ENCODE measurements at regions of chr16 and their contacts with region 1.

Region 1: DNA sequence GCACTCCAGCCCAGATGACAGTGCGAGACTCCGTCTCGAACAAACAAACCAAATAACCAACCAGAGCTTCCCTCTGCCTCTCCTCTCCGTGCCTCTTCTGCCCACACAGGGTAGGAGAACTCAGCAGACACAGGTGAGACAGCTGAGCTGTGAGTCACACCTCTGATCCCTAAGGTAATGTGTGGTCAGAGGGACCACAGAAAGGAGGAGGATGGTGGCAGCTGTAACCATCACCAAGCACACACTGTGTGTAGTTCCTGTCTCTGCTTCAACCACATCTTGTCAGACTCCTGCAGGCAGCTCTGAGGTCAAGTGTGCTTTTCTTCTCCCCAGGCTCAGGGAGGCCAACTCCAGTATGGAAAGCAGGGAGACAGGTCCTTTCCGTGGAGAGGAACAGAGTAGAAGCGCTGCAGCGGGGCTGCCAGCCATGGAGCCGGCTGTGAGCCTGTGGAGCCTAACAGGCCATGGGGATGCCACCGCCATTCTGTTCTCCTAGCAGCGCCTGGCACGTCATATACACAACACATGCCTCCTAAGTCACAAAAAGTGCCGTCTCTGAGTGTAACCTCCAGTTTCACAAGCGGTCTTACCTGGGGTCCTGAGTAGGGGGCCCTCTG is 7.1 kb downstream of the NUDT16L1 start:
- DNase-seq: peak in 1 of 10 donors; percentile 22
- H3K4me3 ChIP-seq: no peak overlapping the region
- H3K27ac ChIP-seq: no peak overlapping the region
- H3K27me3 ChIP-seq: no peaks in the 10 kb centered on the region
- CTCF ChIP-seq: no peak

Region 2: DNA sequence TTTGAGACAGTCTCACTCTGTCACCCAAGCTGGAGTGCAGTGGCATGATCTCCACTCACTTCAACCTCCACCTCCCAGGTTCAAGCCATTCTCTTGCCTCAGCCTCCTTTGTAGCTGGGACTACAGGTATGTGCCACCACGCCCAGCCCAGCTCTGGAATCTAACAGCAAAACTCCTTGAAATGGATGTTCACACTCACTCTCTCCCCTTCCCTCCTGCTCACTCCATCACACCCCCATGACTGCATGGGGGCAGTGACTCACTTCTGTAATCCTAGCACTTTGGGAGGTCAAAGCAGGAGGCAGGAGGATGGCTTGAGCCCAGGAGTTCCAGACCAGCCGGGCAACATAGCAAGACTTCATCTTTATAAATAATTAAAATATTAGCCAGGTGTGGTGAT is 416.5 kb before region 1 on chr16:
- intact Hi-C with region 1: no loop called
- DNase-seq: no peak
- H3K4me3 ChIP-seq: no peak overlapping the region
- H3K27ac ChIP-seq: no peak overlapping the region
- H3K27me3 ChIP-seq: no peaks in the 10 kb centered on the region
- CTCF ChIP-seq: no peak

Region 3: GRCh38 chr16:4664538-4665418 is 35.7 kb before region 1 on chr16:
- intact Hi-C with region 1: no loop called
- DNase-seq: no peak
- H3K4me3 ChIP-seq: no peak overlapping the region
- H3K27ac ChIP-seq: peak overlapping the region in 35 of 59 donors; percentile 12 to 94 (median 72)
- H3K27me3 ChIP-seq: no peaks in the 10 kb centered on the region
- CTCF ChIP-seq: no peak

Region 4: DNA sequence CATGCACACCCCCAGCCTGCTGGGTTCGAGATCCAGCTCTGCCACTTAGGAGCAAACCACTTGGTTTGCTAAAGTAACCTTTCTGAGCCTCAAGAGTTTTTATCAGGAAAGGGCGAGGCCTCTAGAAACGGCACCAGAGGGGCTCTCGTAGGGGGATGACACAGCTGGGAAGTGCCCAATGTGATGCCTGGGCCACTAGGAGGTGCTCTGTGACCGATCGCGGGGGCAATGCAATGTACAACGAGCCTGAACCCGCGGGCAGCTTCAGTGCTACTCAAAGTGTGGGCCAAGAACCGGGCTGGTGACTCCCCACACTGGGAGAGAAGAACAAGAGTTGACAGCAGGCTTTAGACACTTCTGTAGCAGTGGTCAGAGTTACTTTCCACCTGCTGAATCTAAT is 355.9 kb after region 1 on chr16:
- intact Hi-C with region 1: loop called in 1 of 2 experiments (anchors 10 kb)
- DNase-seq: peak in 1 of 10 donors; percentile 38
- H3K4me3 ChIP-seq: no peak overlapping the region
- H3K27ac ChIP-seq: no peak overlapping the region
- H3K27me3 ChIP-seq: no peaks in the 10 kb centered on the region
- CTCF ChIP-seq: peak in 26 of 56 donors; percentile 8 to 44 (median 23)